ENCODE measurements at regions of chr19 and their contacts with region 1.

Region 1: DNA sequence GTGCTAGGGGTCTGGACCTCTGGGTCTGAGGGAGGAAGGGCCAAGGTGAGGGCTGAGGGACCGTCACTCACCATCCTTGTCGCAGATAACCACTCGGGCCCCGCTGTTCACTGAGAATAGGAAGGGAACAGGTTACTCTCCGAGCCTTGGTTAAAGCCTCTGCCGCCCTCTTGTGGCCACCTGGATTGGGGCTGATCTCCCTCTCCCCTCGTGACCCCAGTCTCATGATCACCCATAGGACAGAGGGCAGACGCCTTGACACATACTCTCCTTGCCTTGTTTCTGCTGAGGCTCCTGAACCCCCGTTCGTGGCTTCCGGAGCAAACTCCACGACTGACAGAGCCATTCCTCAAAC is 580 bp downstream of the HSD17B14 start:
- DNase-seq: peak; percentile 94
- H3K4me3 Mint-ChIP-seq: peak overlapping the region; percentile 65
- H3K27ac Mint-ChIP-seq: peak overlapping the region; percentile 41
- H3K4me1 Mint-ChIP-seq: peaks cover 17% of the 10 kb centered on the region
- H3K27me3 Mint-ChIP-seq: peaks cover 4% of the 10 kb centered on the region

Region 2: GRCh38 chr19:48784540-48784939 is 51.2 kb before region 1 on chr19:
- CTCF ChIA-PET with region 1: interaction called, 109 read pairs
- POLR2A ChIA-PET with region 1: interaction called, 3 read pairs
- DNase-seq: no peak
- H3K4me3 Mint-ChIP-seq: no peak overlapping the region
- H3K27ac Mint-ChIP-seq: no peak overlapping the region
- H3K4me1 Mint-ChIP-seq: peaks cover 3% of the 10 kb centered on the region
- H3K27me3 Mint-ChIP-seq: peaks cover 14% of the 10 kb centered on the region

Region 3: DNA sequence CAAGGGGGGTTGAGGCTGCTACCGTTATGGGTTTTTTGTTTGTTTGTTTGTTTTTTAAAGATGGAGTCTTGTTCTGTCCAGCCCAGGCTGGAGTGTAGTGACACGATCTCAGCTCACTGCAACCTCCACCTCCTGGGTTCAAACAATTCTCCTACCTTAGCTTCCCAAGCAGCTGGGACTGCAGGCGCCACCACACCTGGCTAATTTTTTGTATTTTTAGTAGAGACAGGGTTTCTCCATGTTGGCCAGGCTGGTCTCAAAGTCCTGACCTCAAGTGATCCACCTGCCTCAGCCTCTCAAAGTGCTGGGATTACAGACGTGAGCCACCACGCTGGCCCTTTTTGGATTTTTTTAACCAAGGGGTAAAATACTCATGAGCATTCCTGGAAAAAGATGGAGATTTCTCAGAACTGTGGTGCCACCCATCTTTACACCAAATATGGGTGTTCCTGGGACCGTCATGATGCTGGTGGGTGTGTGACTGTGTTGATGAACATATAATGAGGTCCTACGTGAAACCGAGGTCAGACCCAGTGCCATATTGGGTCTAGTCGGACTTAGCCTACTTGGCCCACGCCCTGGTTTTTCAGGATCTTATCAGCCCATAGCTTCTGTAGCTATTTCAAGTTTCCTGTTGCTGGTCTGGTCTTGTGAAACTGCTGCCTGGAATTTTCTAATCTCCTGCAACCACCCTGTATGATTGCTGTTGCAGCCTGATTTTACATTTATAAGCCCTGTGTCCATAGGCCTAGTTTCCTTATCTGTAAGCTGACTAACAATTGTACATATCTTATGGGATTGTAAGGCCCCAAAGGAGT is 42.7 kb after region 1 on chr19:
- CTCF ChIA-PET with region 1: no interaction called
- POLR2A ChIA-PET with region 1: no interaction called
- DNase-seq: peak; percentile 46
- H3K4me3 Mint-ChIP-seq: no peak overlapping the region
- H3K27ac Mint-ChIP-seq: peak overlapping the region; percentile 63
- H3K4me1 Mint-ChIP-seq: peaks cover 47% of the 10 kb centered on the region
- H3K27me3 Mint-ChIP-seq: no peaks in the 10 kb centered on the region

Region 4: DNA sequence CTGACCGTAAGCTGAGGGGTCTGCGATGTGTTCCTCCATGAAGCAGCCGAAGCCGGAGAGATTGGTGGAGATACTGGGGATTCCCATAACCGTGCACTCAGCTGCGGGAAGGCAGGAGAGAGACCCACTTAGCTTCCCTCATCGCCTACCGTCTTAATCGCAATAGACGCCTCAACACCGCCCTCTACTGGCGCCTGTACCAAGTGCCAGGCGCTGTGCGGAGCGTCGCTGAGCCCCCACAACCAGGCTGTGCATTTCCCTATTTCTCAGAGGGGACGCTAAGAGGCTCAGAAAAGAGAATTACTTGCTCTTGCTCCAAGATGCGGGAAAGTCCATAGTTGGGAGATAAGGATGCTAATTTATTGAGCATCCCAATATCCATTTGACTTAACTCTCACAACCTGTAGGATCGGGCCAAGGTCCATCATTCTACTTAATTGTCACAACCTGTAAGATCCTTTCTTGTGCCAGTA is 135.2 kb after region 1 on chr19:
- CTCF ChIA-PET with region 1: interaction called, 19 read pairs
- POLR2A ChIA-PET with region 1: no interaction called
- DNase-seq: peak; percentile 81
- H3K4me3 Mint-ChIP-seq: no peak overlapping the region
- H3K27ac Mint-ChIP-seq: no peak overlapping the region
- H3K4me1 Mint-ChIP-seq: peaks cover 27% of the 10 kb centered on the region
- H3K27me3 Mint-ChIP-seq: no peaks in the 10 kb centered on the region